Vagina (tissue), 2 donors: ENCODE measurements at regions of chr1 and their contacts with region 1.

Region 1: GRCh38 chr1:67149179-67149770 is 14.5 kb upstream of the C1orf141 start:
- DNase-seq: no peak
- H3K4me3 ChIP-seq: no peak overlapping the region
- H3K27ac ChIP-seq: no peak overlapping the region
- H3K4me1 ChIP-seq: peaks cover 5% of the 10 kb centered on the region
- H3K27me3 ChIP-seq: no peaks in the 10 kb centered on the region
- CTCF ChIP-seq: peak; percentile 64 to 78 (median 67)
- POLR2A ChIP-seq: no peak

Region 2: DNA sequence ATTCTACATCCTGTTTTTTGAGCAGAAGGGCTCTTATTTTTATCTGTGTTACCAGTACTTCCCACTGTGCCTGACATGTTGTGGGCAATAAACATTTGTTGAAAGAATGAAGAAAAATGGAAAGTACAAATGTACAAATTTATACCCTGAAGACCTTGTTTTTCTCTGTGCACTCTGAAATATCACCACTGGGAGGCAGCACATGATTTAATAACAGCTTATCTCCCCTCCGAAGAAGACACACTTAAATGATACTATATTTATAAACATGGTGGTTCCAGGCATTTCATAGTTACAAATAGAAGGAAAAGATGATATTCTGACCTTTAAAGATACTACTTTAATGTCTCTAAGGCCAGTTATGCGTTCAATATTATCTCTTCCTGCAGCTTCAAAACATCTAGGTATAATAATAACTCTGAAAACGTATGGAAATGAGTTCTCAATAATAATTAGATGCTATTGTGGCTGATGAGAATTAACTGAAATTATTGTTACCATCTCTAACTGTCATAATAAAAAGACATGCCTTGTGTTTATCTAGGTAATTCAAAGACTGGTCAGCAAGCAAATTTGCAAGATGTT is 384.2 kb before region 1 on chr1:
- intact Hi-C with region 1: loop called (anchors 5 kb)
- DNase-seq: no peak
- H3K4me3 ChIP-seq: no peak overlapping the region
- H3K27ac ChIP-seq: no peak overlapping the region
- H3K4me1 ChIP-seq: no peaks in the 10 kb centered on the region
- H3K27me3 ChIP-seq: no peaks in the 10 kb centered on the region
- CTCF ChIP-seq: peak; percentile 49 to 71 (median 62)
- POLR2A ChIP-seq: no peak

Region 3: DNA sequence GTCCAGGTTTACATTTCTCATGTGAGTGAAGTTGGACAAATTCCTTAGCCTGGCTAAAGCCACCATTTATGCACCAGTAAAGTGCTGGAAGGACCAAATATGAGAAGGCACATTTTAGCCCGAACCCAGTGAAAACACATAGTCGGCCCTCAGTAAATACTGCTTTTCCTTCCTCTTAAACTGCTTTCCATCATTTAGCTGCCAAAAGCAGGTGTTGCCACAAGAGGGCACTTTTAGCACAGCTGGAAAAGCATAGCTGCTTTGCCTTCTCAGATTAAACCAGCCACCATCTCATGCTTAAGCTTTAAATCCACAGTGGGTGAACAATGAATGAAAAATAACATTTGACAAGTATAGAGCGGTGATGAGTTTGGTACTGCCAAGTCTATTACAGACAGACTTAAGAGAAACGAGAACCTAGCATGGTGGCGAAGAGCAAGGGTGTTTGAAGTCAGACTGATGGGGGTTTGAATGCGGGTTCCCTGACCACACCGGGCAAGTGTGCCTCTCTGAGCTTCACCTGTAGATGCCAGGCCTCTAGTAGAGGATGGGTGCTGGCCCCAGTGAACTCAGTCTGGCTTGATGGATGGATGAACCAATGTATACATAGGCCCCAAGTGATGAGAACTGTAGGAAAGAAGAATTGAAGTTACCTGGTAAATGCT is 153.1 kb before region 1 on chr1:
- intact Hi-C with region 1: loop called (anchors 5 kb)
- DNase-seq: no peak
- H3K4me3 ChIP-seq: no peak overlapping the region
- H3K27ac ChIP-seq: no peak overlapping the region
- H3K4me1 ChIP-seq: peaks cover 6% of the 10 kb centered on the region
- H3K27me3 ChIP-seq: no peaks in the 10 kb centered on the region
- CTCF ChIP-seq: peak; percentile 39 to 69 (median 63)
- POLR2A ChIP-seq: no peak

Region 4: GRCh38 chr1:67407498-67407897 is 258.2 kb after region 1 on chr1:
- intact Hi-C with region 1: no loop called
- DNase-seq: no peak
- H3K4me3 ChIP-seq: no peak overlapping the region
- H3K27ac ChIP-seq: no peak overlapping the region
- H3K4me1 ChIP-seq: peaks cover 37% of the 10 kb centered on the region
- H3K27me3 ChIP-seq: no peaks in the 10 kb centered on the region
- CTCF ChIP-seq: no peak
- POLR2A ChIP-seq: no peak

Region 5: GRCh38 chr1:68506386-68506785 is 1357.1 kb after region 1 on chr1:
- intact Hi-C with region 1: no loop called
- DNase-seq: no peak
- H3K4me3 ChIP-seq: no peak overlapping the region
- H3K27ac ChIP-seq: no peak overlapping the region
- H3K4me1 ChIP-seq: no peaks in the 10 kb centered on the region
- H3K27me3 ChIP-seq: no peaks in the 10 kb centered on the region
- CTCF ChIP-seq: no peak
- POLR2A ChIP-seq: no peak